ENCODE measurements at regions of chr5 and their contacts with region 1.

Region 1: GRCh38 chr5:175895215-175896102 is 24.1 kb downstream of the CPLX2 start:
- DNase-seq: peak in 33 of 35 experiments; percentile 4 to 72 (median 36)
- ATAC-seq: peak; percentile 91 to 100 (median 98)
- H3K4me3 ChIP-seq: peak overlapping the region; percentile 10 to 50
- H3K4me3 Mint-ChIP-seq: peak overlapping the region; percentile 4 to 82 (median 51)
- H3K27ac ChIP-seq: no peak overlapping the region
- H3K27ac Mint-ChIP-seq: peak overlapping the region; percentile 0 to 23
- H3K4me1 ChIP-seq: peaks cover 5 to 25% of the 10 kb centered on the region in 2 experiments
- H3K4me1 Mint-ChIP-seq: peaks cover 31 to 41% (median 34%) of the 10 kb centered on the region in 3 donors
- H3K27me3 ChIP-seq: peaks cover 3 to 14% of the 10 kb centered on the region in 2 experiments
- H3K27me3 Mint-ChIP-seq: no peaks in the 10 kb centered on the region

Region 2: GRCh38 chr5:175788155-175788787 is 107.2 kb before region 1 on chr5:
- CTCF ChIA-PET with region 1: no interaction called
- POLR2A ChIA-PET with region 1: no interaction called
- DNase-seq: no peak
- ATAC-seq: no peak
- H3K4me3 ChIP-seq: no peak overlapping the region
- H3K4me3 Mint-ChIP-seq: no peak overlapping the region
- H3K27ac ChIP-seq: no peak overlapping the region
- H3K27ac Mint-ChIP-seq: no peak overlapping the region
- H3K4me1 ChIP-seq: no peaks in the 10 kb centered on the region
- H3K4me1 Mint-ChIP-seq: no peaks in the 10 kb centered on the region
- H3K27me3 ChIP-seq: peaks cover 0 to 8% of the 10 kb centered on the region in 2 experiments
- H3K27me3 Mint-ChIP-seq: peaks cover 44 to 47% of the 10 kb centered on the region in 2 donors

Region 3: GRCh38 chr5:175828651-175829050 is 66.8 kb before region 1 on chr5:
- CTCF ChIA-PET with region 1: no interaction called
- POLR2A ChIA-PET with region 1: interaction called in 1 of 2 experiments, 12 read pairs
- DNase-seq: no peak
- ATAC-seq: no peak
- H3K4me3 ChIP-seq: no peak overlapping the region
- H3K4me3 Mint-ChIP-seq: no peak overlapping the region
- H3K27ac ChIP-seq: no peak overlapping the region
- H3K27ac Mint-ChIP-seq: no peak overlapping the region
- H3K4me1 ChIP-seq: no peaks in the 10 kb centered on the region
- H3K4me1 Mint-ChIP-seq: no peaks in the 10 kb centered on the region
- H3K27me3 ChIP-seq: peaks cover 2 to 6% of the 10 kb centered on the region in 2 experiments
- H3K27me3 Mint-ChIP-seq: peaks cover 0 to 3% of the 10 kb centered on the region in 2 donors

Region 4: GRCh38 chr5:176596689-176597416 is 701.4 kb after region 1 on chr5:
- CTCF ChIA-PET with region 1: no interaction called
- POLR2A ChIA-PET with region 1: no interaction called
- DNase-seq: peak; percentile 21 to 82 (median 51)
- ATAC-seq: peak; percentile 87 to 91 (median 90)
- H3K4me3 ChIP-seq: peak overlapping the region; percentile 38 to 48
- H3K4me3 Mint-ChIP-seq: peak overlapping the region; percentile 64 to 75 (median 74)
- H3K27ac ChIP-seq: no peak overlapping the region
- H3K27ac Mint-ChIP-seq: peak overlapping the region; percentile 75 to 78
- H3K4me1 ChIP-seq: peaks cover 0 to 13% of the 10 kb centered on the region in 2 experiments
- H3K4me1 Mint-ChIP-seq: peaks cover 5 to 7% (median 5%) of the 10 kb centered on the region in 3 donors
- H3K27me3 ChIP-seq: peaks cover 5 to 16% of the 10 kb centered on the region in 2 experiments
- H3K27me3 Mint-ChIP-seq: peaks cover 0 to 3% of the 10 kb centered on the region in 2 donors

Measured in T-cell (primary cell).